ENCODE measurements at regions of chr7 and their contacts with region 1.

Region 1: GRCh38 chr7:74401137-74401859 is 52.4 kb upstream of the GTF2IRD1 start:
- DNase-seq: peak; percentile 66 to 72
- ATAC-seq: peak; percentile 74 to 87
- H3K4me3 ChIP-seq: no peak overlapping the region
- H3K27ac ChIP-seq: no peak overlapping the region
- H3K4me1 ChIP-seq: no peaks in the 10 kb centered on the region
- CTCF ChIP-seq: peak; percentile 92
- EP300 ChIP-seq: no peak
- POLR2A ChIP-seq: no peak
- RAD21 ChIP-seq: peak; percentile 94 to 96

Region 2: DNA sequence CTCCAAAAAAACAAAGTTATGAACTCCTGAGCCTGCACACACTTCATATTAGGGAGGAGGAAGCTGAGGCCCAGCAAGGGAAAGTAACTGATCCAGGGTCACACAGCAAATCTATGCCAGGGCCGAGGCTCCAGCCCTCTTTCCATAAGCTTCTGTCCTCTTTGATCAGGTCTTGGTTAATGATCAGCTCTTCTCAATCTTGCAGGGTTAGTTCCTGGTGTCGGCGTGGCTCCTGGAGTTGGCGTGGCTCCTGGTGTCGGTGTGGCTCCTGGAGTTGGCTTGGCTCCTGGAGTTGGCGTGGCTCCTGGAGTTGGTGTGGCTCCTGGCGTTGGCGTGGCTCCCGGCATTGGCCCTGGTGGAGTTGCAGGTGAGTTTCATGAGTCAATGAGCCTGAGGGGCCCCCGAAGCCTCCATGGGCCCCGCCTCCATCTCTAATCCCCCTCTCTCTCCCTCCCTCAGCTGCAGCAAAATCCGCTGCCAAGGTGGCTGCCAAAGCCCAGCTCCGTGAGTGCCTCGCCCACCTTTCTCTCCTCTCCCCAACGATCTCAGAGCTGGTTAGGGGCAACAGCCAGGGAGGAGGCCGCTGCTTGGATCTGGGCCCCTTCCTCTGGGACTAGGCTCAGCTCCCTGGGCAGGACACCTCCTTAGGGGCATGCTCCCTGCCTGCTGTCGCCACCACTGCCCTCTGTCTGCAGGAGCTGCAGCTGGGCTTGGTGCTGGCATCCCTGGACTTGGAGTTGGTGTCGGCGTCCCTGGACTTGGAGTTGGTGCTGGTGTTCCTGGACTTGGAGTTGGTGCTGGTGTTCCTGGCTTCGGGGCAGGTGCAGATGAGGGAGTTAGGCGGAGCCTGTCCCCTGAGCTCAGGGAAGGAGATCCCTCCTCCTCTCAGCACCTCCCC is 341.4 kb before region 1 on chr7:
- CTCF ChIA-PET with region 1: interaction called, 23 read pairs
- POLR2A ChIA-PET with region 1: no interaction called
- DNase-seq: peak; percentile 45 to 67
- ATAC-seq: peak; percentile 66 to 70
- H3K4me3 ChIP-seq: no peak overlapping the region
- H3K27ac ChIP-seq: peak overlapping the region; percentile 56 to 57
- H3K4me1 ChIP-seq: peaks cover 25% of the 10 kb centered on the region
- CTCF ChIP-seq: no peak
- EP300 ChIP-seq: no peak
- POLR2A ChIP-seq: no peak
- RAD21 ChIP-seq: no peak

Region 3: GRCh38 chr7:74206589-74207120 is 194.6 kb before region 1 on chr7:
- CTCF ChIA-PET with region 1: interaction called, 684 read pairs
- POLR2A ChIA-PET with region 1: interaction called, 8 read pairs
- DNase-seq: peak; percentile 77
- ATAC-seq: peak; percentile 79 to 81
- H3K4me3 ChIP-seq: no peak overlapping the region
- H3K27ac ChIP-seq: peak overlapping the region; percentile 54 to 70; a peak in 4 of 6 replicates
- H3K4me1 ChIP-seq: peaks cover 19% of the 10 kb centered on the region
- CTCF ChIP-seq: peak; percentile 96
- EP300 ChIP-seq: no peak
- POLR2A ChIP-seq: no peak
- RAD21 ChIP-seq: peak; percentile 91 to 95

Region 4: DNA sequence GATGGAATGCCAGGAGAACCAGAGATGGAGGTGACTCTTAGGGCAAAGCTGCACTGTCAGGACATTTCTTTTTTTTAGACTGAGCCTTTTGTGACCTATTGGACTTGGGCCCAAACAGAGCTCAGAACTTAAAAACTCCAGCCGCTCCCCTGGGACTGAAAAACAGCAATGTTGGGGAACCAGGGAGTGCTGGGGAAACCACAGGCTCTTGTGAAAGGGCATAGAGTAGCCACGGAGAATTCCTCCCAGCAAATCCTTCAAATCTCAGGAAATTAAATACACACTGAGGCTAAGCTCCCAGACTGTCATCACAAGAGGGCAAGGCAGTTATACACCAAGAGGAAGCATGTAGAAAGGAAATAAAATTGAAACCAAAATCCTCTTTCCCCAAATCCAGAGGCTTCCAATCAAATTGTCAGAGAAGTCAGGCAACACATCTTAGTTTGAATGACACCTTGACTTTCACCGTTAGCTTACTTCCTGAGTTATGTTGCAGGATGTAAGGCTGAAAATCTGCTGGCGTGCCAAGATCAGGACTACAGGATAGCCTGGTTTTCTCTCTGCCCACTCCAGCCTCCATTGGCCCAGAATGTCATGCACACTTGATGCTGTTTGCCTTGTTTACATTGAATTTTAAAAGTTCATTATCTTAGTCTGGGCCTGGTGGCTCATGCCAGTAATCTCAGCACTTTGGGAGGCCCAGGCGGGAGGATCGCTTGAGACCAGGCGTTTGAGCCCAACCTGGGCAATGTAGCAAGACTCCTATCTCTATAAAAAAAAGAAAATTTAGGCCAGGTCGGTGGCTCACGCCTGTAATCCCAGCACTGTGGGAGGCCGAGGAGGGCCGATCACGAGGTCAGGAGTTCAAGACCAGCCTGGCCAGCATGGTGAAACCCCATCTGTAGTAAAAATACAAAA is 144.5 kb before region 1 on chr7:
- CTCF ChIA-PET with region 1: interaction called, 10 read pairs
- POLR2A ChIA-PET with region 1: no interaction called
- DNase-seq: no peak
- ATAC-seq: no peak
- H3K4me3 ChIP-seq: no peak overlapping the region
- H3K27ac ChIP-seq: no peak overlapping the region
- H3K4me1 ChIP-seq: peaks cover 15% of the 10 kb centered on the region; the same call in 1 of the 3 replicates
- CTCF ChIP-seq: no peak
- EP300 ChIP-seq: no peak
- POLR2A ChIP-seq: no peak
- RAD21 ChIP-seq: no peak

Region 5: DNA sequence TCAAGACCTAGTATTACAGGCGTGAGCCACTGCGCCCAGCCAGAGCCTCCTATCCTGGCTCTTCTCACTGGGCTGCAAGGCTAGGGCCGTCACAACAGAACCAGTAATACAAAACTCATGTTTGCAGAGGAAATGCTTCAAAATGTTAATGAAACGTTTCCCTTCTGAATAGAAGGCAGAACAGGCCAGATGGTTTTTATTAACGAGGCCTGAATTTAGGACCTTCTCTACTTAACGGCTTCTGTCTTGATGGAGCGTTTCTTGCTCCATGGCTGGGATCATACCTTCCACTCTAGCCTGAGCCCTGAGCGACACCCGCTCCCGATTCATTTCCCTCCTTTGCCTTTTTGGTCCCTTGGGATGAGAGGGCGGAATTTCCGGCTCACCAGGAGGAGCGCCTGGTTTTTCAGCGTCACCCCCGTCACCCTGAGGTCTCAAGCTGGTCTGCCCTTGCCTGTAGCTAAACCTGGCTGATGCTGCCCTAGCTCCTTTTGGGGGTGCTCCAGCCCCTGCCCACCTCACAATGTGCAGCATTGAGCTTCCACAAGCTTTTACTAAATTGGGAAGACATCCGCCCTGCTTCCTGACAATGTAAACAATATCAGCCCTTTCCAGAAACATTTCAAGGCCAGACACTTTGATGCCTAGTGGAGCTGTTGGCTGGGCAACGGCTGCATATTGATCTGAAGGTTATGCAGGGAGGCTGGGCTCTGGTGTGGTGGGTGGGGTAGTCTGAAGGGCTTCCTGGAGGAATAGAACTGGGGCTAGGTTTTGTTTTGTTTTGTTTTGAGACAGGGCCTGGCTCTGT is 106.9 kb before region 1 on chr7:
- CTCF ChIA-PET with region 1: interaction called, 17 read pairs
- POLR2A ChIA-PET with region 1: no interaction called
- DNase-seq: no peak
- ATAC-seq: no peak
- H3K4me3 ChIP-seq: no peak overlapping the region
- H3K27ac ChIP-seq: peak overlapping the region in 1 of 2 experiments; percentile 40; a peak in 3 of 6 replicates
- H3K4me1 ChIP-seq: peaks cover 44% of the 10 kb centered on the region
- CTCF ChIP-seq: no peak
- EP300 ChIP-seq: no peak
- POLR2A ChIP-seq: no peak
- RAD21 ChIP-seq: no peak

Region 6: GRCh38 chr7:74379938-74380337 is 21.4 kb before region 1 on chr7:
- CTCF ChIA-PET with region 1: interaction called, 18 read pairs
- POLR2A ChIA-PET with region 1: no interaction called
- DNase-seq: no peak
- ATAC-seq: peak; percentile 48 to 61; a peak in 4 of 6 replicates
- H3K4me3 ChIP-seq: no peak overlapping the region
- H3K27ac ChIP-seq: no peak overlapping the region
- H3K4me1 ChIP-seq: peaks cover 8% of the 10 kb centered on the region; the same call in 1 of the 3 replicates
- CTCF ChIP-seq: no peak
- EP300 ChIP-seq: no peak
- POLR2A ChIP-seq: no peak
- RAD21 ChIP-seq: no peak

Region 7: DNA sequence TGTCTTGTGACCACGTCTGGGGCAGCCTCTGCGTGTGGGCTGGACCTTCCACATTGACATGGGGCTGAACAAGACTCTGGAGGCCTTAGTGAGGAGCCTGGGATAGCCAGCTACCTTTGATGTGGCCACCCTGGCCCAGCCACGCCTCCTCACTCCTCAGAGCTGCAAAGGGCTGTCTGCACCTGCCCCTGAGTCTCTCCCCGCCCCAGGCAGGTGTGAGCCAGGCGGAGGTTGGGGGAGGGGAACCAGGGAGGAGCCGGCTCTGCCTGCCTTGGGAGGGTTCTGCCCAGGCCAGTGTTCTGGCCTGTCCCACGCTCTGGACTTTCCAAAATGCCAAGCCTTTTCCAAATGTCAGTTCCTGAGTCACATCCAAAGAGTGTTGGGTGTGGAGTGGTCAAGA is 124.6 kb after region 1 on chr7:
- CTCF ChIA-PET with region 1: no interaction called
- POLR2A ChIA-PET with region 1: no interaction called
- DNase-seq: no peak
- ATAC-seq: no peak; a peak in 1 of 6 replicates
- H3K4me3 ChIP-seq: no peak overlapping the region
- H3K27ac ChIP-seq: 0 out of 6 replicates have a peak overlapping the region, but pooled peaks of 1 of the 2 experiments have one; percentile 4
- H3K4me1 ChIP-seq: no peaks in the 10 kb centered on the region
- CTCF ChIP-seq: no peak
- EP300 ChIP-seq: no peak
- POLR2A ChIP-seq: no peak
- RAD21 ChIP-seq: no peak